ENCODE measurements at regions of chr6 and their contacts with region 1.

Region 1: DNA sequence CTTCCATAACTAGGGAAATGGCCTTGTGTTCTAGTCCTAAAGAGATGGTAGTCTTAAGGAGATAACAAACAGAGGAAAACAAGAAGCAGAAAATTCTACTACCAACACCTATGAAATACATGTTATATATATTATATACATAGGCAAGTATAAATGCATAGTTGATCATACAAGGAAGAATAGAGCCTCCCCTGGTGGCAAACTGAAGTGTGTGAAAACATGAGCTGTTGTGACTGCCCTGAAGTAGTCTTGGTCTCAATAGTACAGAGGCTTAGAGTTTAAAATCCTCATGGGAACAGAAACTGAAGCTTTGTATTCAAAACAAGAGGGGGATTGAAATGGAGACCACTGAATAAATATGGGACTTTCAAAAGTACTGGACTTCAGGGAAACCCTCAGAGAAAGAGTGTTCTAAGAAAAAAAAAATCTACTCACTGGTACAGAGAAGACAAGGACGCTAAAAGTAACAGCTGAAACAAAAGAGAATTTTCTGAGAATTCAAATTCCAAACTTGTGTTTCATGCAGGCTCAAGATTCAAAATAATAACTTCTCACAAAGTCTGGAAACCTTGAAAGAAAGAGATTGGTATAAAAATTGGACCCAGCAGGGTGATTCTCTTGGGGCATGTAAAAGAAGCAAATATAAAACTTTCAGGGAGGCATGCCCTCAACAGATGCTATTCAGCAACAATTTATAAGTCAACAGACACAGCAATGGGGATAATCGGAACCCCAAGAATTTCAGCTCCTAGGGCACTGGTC is 59.7 kb upstream of the SAMD3 start:
- DNase-seq: peak in 2 of 4 experiments; percentile 15 to 36
- ATAC-seq: peak; percentile 85
- H3K4me3 ChIP-seq: no peak overlapping the region
- H3K27ac ChIP-seq: no peak overlapping the region
- H3K4me1 ChIP-seq: no peaks in the 10 kb centered on the region
- H3K27me3 ChIP-seq: 0 out of 5 replicates have a peak, but pooled peaks cover 0 to 2% of the 10 kb centered on the region in 2 experiments
- CTCF ChIP-seq: peak; percentile 39 to 70 (median 46); a peak in 3 of 6 replicates
- EP300 ChIP-seq: no peak
- POLR2A ChIP-seq: no peak
- RAD21 ChIP-seq: peak; percentile 61 to 68

Region 2: DNA sequence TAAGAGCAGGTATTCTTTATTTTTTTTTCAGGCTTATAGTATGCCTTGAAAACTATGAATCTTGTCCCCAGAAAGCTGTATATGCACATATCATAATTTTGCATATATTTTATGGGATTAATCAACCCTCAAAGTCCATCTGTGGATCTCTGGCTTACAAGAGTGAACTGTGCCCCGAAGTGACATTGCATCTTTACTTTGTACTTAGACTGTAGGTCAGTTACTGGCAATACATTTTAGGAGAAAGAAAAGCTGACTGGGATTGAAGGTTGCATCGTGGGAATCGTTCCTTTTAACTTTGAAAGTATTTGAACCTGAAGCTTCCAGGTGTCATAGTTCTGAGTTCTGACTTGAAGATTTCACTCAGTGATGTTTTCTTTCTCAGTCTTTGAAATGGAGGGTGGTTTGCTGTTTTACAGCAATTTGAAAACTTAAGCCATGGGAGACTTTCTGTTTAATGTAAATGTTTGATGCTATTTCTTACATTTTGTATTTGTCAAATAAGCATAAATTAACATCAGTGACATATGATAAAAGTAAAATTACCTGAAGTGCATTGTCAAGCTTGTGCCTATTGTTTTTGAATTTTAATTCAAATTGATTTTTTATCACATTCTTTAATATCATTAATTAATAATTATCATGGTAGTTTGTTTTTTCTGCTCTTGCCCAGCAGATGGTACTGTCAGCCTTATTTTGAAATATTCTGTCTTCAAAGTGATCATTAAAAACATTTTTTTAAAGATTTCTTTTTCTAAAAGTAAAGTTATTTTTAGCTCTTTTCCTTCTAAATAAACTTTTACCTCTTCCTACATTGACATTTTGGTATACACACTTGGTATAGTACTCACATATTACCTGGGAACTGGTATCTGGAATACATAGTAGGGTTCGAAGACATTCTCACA is 235.1 kb before region 1 on chr6:
- CTCF ChIA-PET with region 1: no interaction called
- POLR2A ChIA-PET with region 1: no interaction called
- in situ Hi-C with region 1: no loop called
- intact Hi-C with region 1: loop called (anchors 2 kb)
- DNase-seq: no peak
- ATAC-seq: no peak
- H3K4me3 ChIP-seq: no peak overlapping the region
- H3K27ac ChIP-seq: no peak overlapping the region
- H3K4me1 ChIP-seq: no peaks in the 10 kb centered on the region
- H3K27me3 ChIP-seq: no peaks in the 10 kb centered on the region
- CTCF ChIP-seq: peak in 1 of 3 experiments; percentile 29; a peak in 2 of 6 replicates
- EP300 ChIP-seq: no peak
- POLR2A ChIP-seq: no peak
- RAD21 ChIP-seq: 0 out of 4 replicates have a peak, but pooled peaks of 1 of the 2 experiments have one; percentile 10

Region 3: DNA sequence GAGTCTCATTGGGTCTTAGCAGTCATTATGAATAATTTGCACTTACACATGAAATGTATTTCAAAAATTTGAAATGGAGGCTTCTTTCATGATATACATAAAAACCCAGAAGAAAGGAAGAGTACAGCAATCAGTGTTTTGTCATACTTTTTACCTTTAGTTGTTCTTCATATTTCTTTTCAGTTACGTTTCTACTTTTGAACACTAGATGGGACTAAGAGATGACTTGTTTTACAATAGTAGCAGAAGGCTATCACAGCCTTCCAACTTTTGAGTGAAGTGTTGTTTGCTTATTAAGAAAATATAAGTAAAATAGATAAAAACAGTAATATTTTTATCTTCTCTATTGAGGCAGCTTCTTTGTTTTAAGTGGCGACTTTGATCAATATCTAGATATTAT is 205.9 kb before region 1 on chr6:
- CTCF ChIA-PET with region 1: no interaction called
- POLR2A ChIA-PET with region 1: no interaction called
- in situ Hi-C with region 1: no loop called
- intact Hi-C with region 1: loop called (anchors 5 kb)
- DNase-seq: peak in 1 of 4 experiments; percentile 4
- ATAC-seq: no peak
- H3K4me3 ChIP-seq: no peak overlapping the region
- H3K27ac ChIP-seq: no peak overlapping the region
- H3K4me1 ChIP-seq: no peaks in the 10 kb centered on the region
- H3K27me3 ChIP-seq: no peaks in the 10 kb centered on the region
- CTCF ChIP-seq: peak in 1 of 3 experiments; percentile 37; a peak in 2 of 6 replicates
- EP300 ChIP-seq: no peak
- POLR2A ChIP-seq: no peak
- RAD21 ChIP-seq: peak; percentile 39 to 42; a peak in 3 of 4 replicates

Region 4: GRCh38 chr6:130148181-130148580 is 134.2 kb before region 1 on chr6:
- CTCF ChIA-PET with region 1: no interaction called
- POLR2A ChIA-PET with region 1: no interaction called
- in situ Hi-C with region 1: no loop called
- intact Hi-C with region 1: loop called (anchors 1 kb)
- DNase-seq: peak in 2 of 4 experiments; percentile 15 to 20
- ATAC-seq: peak; percentile 77; the same call in 2 of the 3 replicates
- H3K4me3 ChIP-seq: no peak overlapping the region
- H3K27ac ChIP-seq: no peak overlapping the region
- H3K4me1 ChIP-seq: no peaks in the 10 kb centered on the region; a peak in 1 of 5 replicates
- H3K27me3 ChIP-seq: no peaks in the 10 kb centered on the region; a peak in 1 of 5 replicates
- CTCF ChIP-seq: peak; percentile 48 to 60 (median 59)
- EP300 ChIP-seq: no peak
- POLR2A ChIP-seq: no peak
- RAD21 ChIP-seq: peak; percentile 24 to 50; a peak in 3 of 4 replicates

Region 5: DNA sequence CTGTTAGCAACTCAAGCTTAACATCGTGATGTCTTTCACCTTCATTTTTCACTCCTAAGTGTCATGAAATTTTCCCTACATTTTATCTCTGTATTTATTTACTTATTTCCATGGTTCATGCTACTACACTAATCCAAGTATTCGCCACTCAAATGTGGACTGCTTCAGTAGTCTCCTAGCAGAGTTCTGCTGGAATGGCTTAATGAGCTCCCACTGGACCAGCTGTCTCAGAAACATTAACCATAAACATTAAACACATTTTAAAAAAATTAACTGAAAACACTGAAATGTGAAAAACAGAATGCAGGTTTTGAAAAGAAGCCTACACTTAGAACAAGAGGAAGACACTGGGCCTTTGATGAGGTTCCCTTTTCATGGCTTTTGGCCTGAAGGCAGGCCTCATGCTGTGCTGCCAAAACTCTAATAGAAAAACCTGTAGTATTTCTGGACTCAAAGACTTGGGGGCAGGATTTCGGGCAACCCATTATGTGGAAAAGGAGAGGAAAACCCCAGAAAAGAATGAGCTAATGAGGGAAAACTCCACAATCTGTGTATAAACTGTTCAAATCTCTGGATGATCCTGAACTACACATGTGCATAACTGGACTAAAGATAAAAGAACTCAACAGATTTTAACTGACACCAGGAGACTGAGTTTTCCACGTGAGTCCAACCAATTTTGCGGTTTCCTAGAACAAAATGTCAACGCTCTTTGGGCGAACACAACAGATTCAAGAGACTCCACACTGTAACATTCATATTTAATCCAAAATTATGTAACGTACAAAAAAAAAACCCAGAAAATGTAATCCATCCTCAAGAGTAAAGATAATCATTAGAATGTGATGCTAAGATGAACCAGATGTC is 92.7 kb before region 1 on chr6:
- CTCF ChIA-PET with region 1: no interaction called
- POLR2A ChIA-PET with region 1: no interaction called
- in situ Hi-C with region 1: no loop called
- intact Hi-C with region 1: no loop called
- DNase-seq: no peak
- ATAC-seq: no peak
- H3K4me3 ChIP-seq: no peak overlapping the region
- H3K27ac ChIP-seq: no peak overlapping the region
- H3K4me1 ChIP-seq: no peaks in the 10 kb centered on the region; a peak in 1 of 5 replicates
- H3K27me3 ChIP-seq: no peaks in the 10 kb centered on the region
- CTCF ChIP-seq: no peak
- EP300 ChIP-seq: no peak
- POLR2A ChIP-seq: no peak
- RAD21 ChIP-seq: no peak

Measured in K562 (cell line).